Caki2 (cell line): ENCODE measurements at regions of chr10 and their contacts with region 1.

Region 1: GRCh38 chr10:6382081-6382480 is 179.3 kb downstream of the PFKFB3 start:
- DNase-seq: no peak

Region 2: DNA sequence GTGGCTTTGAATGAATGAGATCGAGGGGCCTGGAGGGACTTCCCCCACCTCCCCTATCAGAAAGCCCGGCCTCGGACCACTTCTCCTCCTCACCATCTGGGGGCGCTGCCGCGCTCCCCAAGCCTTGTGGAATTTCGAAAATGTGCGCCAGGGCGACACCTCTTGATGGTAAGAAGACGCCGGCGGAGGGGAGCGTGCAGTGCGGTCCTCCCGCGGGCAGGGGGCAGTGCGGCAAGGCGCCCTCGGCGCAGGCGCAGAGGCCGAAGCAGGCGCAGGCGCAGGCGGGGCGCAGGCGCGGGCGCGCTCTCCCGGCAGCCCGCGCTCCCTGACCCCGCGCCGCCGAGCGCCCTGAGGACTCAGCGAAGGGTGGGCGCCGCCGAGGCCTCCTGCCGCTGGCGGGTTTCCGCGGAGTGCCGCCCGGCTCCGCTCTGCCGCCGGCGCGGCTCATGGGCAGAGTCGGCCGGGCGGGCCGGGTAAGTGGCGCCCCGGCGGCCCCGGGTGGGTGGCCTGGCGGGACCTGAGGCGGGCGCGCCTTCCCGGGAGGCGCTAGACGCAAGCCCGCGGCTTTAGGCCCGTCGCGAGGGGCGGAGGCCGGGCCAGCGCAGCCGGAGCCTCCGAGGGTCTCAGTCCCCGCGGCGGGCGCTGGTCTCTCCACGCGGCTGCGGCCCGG is 293.2 kb before region 1 on chr10 and contains the start of gene RBM17:
- in situ Hi-C with region 1: loop called (anchors 25 kb)
- DNase-seq: peak; percentile 95
- total RNA-seq, gene RBM17: 17.9 and 21.9 TPM in 2 replicates

Region 3: DNA sequence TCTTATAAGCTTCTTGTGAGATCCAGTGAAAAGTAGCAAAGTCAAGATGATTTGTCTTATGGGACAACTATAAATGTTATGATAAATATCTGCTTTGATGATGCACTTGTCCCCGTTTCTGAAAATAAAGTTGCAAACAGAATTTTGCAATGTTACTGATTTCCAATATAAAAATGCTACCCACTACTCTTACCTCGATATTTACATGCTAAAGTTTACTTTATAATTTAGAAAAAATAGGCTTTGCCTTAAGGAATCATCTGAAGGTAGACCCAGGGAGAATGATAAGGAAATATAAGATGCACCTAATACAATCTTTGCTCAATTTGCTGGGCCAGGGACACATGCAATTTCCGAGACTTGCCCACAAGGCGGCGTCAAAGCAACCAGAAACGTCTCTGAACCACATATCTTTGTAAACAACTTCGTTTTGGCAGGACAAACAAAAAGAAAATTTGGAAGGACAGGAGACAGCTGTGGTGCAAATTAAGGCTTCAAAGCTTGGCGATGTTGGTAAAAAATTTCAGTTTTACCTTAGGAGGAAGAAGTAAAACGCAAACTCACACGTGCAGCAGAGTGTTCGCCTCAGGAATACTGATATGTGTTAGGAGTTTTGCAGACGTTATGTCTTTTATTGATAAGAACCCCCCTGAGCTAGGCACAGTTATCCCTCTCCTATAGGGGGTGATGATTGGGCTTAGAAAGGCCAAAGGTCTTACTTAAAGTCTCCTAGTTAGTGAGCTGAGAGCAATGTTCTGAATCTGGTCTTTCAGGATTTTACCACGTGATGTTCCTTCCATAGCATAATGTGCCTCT is 63.6 kb after region 1 on chr10:
- in situ Hi-C with region 1: no loop called
- DNase-seq: peak; percentile 29